WTC11 (cell line): ENCODE measurements at regions of chr1 and their contacts with region 1.

Region 1: DNA sequence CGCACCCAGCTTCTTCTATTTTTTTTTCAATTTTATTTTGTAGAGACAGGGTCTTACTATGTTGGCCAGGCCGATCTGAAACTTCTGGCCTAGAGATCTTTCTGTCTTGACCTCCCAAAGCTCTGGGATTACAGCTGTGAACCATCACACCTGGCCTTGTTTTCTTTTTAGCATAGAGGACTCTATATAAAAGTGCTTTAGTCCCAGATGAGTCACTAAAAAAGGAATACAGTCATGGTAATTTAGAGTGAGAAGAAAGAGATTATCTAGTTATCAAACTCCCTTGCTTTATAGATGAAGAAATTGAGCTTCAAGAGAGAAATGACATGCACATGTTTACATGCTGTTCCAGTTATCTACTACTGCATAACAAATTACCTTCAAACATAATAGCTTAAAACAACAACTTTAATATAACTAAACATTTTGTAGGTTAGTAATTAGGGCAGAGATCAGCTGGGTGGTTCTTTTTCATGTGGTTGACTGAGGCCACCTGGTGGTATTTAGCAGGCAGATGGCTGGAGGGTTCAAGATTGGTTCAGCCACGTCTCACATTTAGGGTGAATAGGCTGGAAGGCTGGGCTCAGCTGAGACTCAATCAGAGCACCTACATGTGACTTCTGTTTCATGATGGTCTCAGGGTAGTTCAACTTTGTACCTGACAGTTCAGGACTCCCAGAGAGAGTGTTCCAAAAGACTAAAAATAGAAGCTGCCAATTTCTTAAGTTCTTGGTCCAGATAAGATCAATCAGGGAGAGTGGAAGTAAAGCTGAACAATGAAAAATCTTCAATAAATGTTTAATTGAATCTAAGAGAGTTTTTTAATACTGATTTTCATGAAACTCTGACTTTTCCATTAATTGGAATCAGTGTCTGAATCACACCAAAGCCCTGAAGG is 16.9 kb upstream of the MTF2 start:
- DNase-seq: peak; percentile 29
- ATAC-seq: peak; percentile 94
- H3K4me3 Mint-ChIP-seq: no peak overlapping the region
- H3K27ac Mint-ChIP-seq: no peak overlapping the region
- H3K4me1 Mint-ChIP-seq: no peaks in the 10 kb centered on the region
- H3K27me3 Mint-ChIP-seq: no peaks in the 10 kb centered on the region; the same call in none of the 2 replicates
- CTCF ChIP-seq: no peak

Region 2: DNA sequence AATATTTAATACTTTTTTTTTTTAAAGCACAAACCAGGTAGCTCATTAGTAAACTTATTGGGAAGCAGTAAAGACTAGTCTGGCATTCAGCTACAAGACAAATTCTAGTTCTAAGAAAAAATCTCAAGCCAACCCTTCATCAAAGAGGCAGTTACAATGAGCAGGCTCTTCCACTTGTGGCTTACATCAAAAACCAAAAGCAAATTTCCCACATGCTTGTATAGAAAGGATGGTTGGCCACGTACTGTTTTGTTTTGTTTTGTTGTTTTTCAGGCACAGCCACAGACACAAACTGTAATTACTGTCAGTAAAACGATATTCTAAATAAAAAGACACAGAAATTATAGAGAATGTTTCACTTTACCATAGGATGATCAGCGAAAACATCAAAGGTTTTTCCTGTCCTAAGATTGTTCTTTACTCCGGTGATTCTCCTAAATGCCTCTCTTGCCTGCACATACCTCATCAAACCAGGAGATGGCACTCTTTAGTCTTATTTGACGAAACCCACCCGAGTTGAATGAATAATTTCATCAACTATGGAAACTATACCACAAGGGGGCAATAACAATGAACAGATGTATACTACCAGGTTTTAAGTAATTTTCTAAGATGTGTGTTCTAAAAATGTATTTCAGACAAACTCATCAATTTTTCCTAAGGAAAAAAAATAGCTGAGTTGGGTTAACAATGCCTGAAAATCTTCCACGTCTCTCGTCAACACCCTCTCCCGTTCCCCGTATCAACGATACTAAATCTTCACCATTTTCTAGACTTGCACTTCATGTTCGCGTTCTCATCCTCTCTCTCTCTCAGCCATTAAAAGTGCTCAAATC is 203.4 kb before region 1 on chr1:
- CTCF ChIA-PET with region 1: interaction called, 12 read pairs
- POLR2A ChIA-PET with region 1: no interaction called
- DNase-seq: peak; percentile 41
- ATAC-seq: peak; percentile 85
- H3K4me3 Mint-ChIP-seq: no peak overlapping the region
- H3K27ac Mint-ChIP-seq: no peak overlapping the region
- H3K4me1 Mint-ChIP-seq: no peaks in the 10 kb centered on the region
- H3K27me3 Mint-ChIP-seq: no peaks in the 10 kb centered on the region
- CTCF ChIP-seq: peak; percentile 79

Region 3: DNA sequence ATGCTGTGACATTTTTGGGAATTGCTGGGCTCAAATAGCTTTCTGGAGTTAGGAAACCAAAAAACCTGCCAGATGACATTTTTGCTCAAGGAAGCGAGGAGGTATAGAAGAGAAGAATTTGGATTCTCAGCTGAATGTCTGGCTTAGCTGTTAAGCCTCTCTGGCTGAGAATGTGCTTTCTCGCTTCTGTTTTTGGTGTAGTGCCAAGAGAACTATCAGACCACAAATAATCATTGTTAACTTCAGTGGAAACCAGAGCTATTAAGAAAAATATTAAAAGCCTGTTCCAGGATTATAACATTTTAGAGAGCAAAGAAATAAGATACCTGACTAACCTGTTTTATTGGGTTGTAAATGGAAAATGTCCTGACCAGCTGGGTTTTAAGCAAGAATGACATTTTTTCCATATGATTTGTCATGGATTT is 61.4 kb before region 1 on chr1:
- CTCF ChIA-PET with region 1: interaction called, 11 read pairs
- POLR2A ChIA-PET with region 1: no interaction called
- DNase-seq: no peak
- ATAC-seq: peak; percentile 44
- H3K4me3 Mint-ChIP-seq: peak overlapping the region; percentile 38
- H3K27ac Mint-ChIP-seq: peak overlapping the region; percentile 92
- H3K4me1 Mint-ChIP-seq: peaks cover 23% of the 10 kb centered on the region
- H3K27me3 Mint-ChIP-seq: no peaks in the 10 kb centered on the region
- CTCF ChIP-seq: no peak

Region 4: DNA sequence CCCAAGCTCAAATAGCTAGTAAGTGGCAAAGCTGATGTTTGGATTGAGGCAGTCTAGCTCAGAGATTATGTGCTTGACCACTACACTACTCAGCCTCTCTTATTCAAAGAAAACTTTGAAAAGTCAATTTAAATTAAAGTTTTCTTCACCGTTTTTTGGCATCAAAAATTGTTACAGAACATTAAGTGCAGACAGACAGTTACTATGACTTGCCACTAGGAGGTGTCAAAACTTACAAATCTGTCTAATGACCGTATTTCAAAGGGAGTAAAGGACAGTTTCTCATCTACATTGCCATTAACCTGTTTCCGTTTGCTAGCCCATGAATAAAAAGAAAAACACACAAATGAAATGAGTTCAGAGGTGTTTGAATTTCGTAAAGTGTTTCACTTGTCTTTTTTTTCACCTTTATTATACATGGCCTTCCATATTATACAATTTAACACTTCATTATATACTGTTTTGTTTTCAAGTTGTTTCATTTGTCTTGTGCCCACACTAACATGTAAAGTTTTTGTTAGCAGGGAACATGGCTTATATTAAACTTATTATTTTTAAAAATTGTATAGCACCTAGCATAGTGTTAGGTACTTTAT is 40.5 kb before region 1 on chr1:
- CTCF ChIA-PET with region 1: interaction called, 22 read pairs
- POLR2A ChIA-PET with region 1: no interaction called
- DNase-seq: no peak
- ATAC-seq: peak; percentile 56; the same call in 1 of the 2 replicates
- H3K4me3 Mint-ChIP-seq: no peak overlapping the region
- H3K27ac Mint-ChIP-seq: no peak overlapping the region
- H3K4me1 Mint-ChIP-seq: peaks cover 10% of the 10 kb centered on the region
- H3K27me3 Mint-ChIP-seq: no peaks in the 10 kb centered on the region
- CTCF ChIP-seq: peak; percentile 76